Mammary epithelial cell (primary cell): ENCODE measurements at regions of chr3 and their contacts with region 1.

Region 1: GRCh38 chr3:122183521-122183892 is at the start of gene CASR:
- DNase-seq: peak; percentile 5
- H3K4me3 ChIP-seq: peak within 1 kb of the TSS in 2 of 3 experiments; percentile 6 to 13
- H3K27ac ChIP-seq: no peak within 1 kb of the TSS
- H3K4me1 ChIP-seq: peaks cover 9% of the 10 kb centered on the region
- H3K27me3 ChIP-seq: peaks cover 16% of the 10 kb centered on the region
- CTCF ChIP-seq: no peak
- total RNA-seq, gene CASR: not detected

Region 2: GRCh38 chr3:122245513-122246174 is 62.1 kb after region 1 on chr3:
- CTCF ChIA-PET with region 1: interaction called, 10 read pairs
- dilution Hi-C with region 1: no loop called
- in situ Hi-C with region 1: no loop called
- intact Hi-C with region 1: no loop called
- DNase-seq: peak; percentile 46
- H3K4me3 ChIP-seq: peak overlapping the region in 1 of 3 experiments; percentile 19
- H3K27ac ChIP-seq: no peak overlapping the region
- H3K4me1 ChIP-seq: no peaks in the 10 kb centered on the region
- H3K27me3 ChIP-seq: peaks cover 4% of the 10 kb centered on the region
- CTCF ChIP-seq: peak; percentile 16 to 17

Region 3: DNA sequence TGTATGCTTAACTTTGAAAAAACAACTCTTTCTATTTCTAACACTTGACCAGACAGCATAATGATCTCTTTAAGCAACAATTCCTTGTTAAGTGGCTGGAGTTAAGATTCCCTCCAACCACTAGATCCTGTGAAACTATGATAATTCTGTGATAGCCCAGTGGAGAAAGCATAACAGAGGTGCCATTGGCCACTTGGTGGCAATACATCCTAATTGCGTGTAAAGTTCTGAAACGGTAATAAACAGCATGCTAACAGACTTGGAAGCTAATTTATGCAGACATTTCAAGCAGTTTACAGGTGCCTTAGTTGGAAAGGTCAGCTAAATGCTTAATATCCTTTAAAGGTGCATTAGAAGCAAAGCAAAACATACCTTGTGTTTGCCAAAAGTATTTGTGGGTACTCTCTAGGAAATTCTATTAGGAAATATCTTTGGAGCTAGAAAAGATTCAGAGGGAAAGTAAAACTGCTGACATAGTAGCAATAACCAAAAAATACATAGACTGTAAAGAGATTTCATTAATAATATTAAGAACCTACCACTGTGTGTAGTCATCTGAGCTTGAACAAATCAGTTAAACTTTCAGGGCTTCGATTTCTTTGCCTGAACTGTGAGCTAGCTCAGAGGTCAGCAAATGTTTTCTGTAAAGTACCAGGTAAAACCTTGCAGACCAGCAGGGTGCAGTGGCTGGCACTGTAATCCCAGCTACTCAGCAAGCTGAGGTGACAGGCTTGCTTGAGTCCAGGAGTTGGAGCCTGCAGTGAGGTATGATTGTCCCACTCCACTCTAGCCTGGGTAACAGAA is 122.5 kb after region 1 on chr3:
- CTCF ChIA-PET with region 1: no interaction called
- dilution Hi-C with region 1: no loop called
- in situ Hi-C with region 1: no loop called
- intact Hi-C with region 1: no loop called
- DNase-seq: peak; percentile 56
- H3K4me3 ChIP-seq: no peak overlapping the region
- H3K27ac ChIP-seq: no peak overlapping the region
- H3K4me1 ChIP-seq: peaks cover 19% of the 10 kb centered on the region
- H3K27me3 ChIP-seq: no peaks in the 10 kb centered on the region
- CTCF ChIP-seq: peak; percentile 53 to 78